ENCODE measurements at regions of chr5 and their contacts with region 1.

Region 1: GRCh38 chr5:54785729-54786591 is 199.4 kb downstream of the ESM1 start:
- DNase-seq: peak; percentile 46 to 85 (median 68)
- ATAC-seq: peak; percentile 99
- H3K4me3 ChIP-seq: no peak overlapping the region
- H3K27ac ChIP-seq: peak overlapping the region; percentile 7; the same call in 2 of the 3 replicates
- H3K4me1 ChIP-seq: peaks cover 9 to 16% of the 10 kb centered on the region in 2 experiments
- H3K27me3 ChIP-seq: no peaks in the 10 kb centered on the region
- CTCF ChIP-seq: peak; percentile 29 to 50 (median 31)
- EP300 ChIP-seq: peak; percentile 58
- POLR2A ChIP-seq: no peak
- RAD21 ChIP-seq: peak in 1 of 2 experiments; percentile 10; a peak in 2 of 4 replicates

Region 2: GRCh38 chr5:54743997-54744788 is 41.8 kb before region 1 on chr5:
- CTCF ChIA-PET with region 1: no interaction called
- POLR2A ChIA-PET with region 1: no interaction called
- in situ Hi-C with region 1: no loop called
- intact Hi-C with region 1: loop called (anchors 5 kb)
- DNase-seq: peak; percentile 66 to 92 (median 72)
- ATAC-seq: peak; percentile 88
- H3K4me3 ChIP-seq: no peak overlapping the region
- H3K27ac ChIP-seq: peak overlapping the region; percentile 99
- H3K4me1 ChIP-seq: peaks cover 16 to 65% of the 10 kb centered on the region in 2 experiments
- H3K27me3 ChIP-seq: no peaks in the 10 kb centered on the region
- CTCF ChIP-seq: no peak
- EP300 ChIP-seq: peak; percentile 93
- POLR2A ChIP-seq: no peak; the same call in 1 of the 2 replicates
- RAD21 ChIP-seq: no peak

Region 3: GRCh38 chr5:54905943-54906537 is 120.1 kb after region 1 on chr5:
- CTCF ChIA-PET with region 1: no interaction called
- POLR2A ChIA-PET with region 1: no interaction called
- in situ Hi-C with region 1: no loop called
- intact Hi-C with region 1: no loop called
- DNase-seq: peak; percentile 37 to 61 (median 46)
- ATAC-seq: peak; percentile 69
- H3K4me3 ChIP-seq: no peak overlapping the region
- H3K27ac ChIP-seq: no peak overlapping the region
- H3K4me1 ChIP-seq: no peaks in the 10 kb centered on the region
- H3K27me3 ChIP-seq: peaks cover 0 to 7% of the 10 kb centered on the region in 2 experiments; a peak in 2 of 5 replicates
- CTCF ChIP-seq: peak; percentile 60 to 82 (median 68); a peak in 5 of 6 replicates
- EP300 ChIP-seq: no peak
- POLR2A ChIP-seq: no peak
- RAD21 ChIP-seq: peak; percentile 79 to 80

Region 4: DNA sequence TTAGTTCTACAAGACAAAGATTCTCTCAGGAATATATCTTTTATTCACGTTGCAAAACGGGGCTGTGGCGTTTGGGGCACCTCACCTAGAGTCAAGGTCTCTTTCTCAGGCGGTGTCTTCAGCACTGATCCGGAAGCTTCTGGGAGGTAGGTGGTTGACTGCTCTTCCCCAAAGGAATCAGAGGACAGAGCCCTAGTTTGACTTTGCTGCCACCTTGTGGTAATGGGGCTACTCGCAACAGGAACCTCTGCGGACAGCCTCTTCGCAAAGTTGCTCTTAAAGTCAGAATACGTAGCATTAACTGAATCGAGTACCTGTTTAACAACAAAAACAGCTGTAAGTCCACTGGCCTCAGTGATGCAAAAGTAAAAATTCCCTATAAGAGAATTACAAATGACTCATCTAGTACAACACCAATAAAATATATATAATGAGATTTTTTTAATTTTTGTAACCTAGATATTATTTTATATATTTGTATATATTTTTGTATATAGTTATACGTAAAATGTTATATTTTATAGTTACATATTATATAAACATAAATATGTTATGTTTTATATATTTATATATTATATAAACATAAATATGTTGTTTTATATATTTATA is 360.7 kb after region 1 on chr5:
- CTCF ChIA-PET with region 1: no interaction called
- POLR2A ChIA-PET with region 1: no interaction called
- in situ Hi-C with region 1: no loop called
- intact Hi-C with region 1: no loop called
- DNase-seq: peak; percentile 63 to 84 (median 68)
- ATAC-seq: peak; percentile 99
- H3K4me3 ChIP-seq: no peak overlapping the region
- H3K27ac ChIP-seq: no peak overlapping the region
- H3K4me1 ChIP-seq: no peaks in the 10 kb centered on the region
- H3K27me3 ChIP-seq: peaks cover 4 to 17% of the 10 kb centered on the region in 2 experiments; a peak in 3 of 5 replicates
- CTCF ChIP-seq: peak; percentile 86 to 91 (median 88)
- EP300 ChIP-seq: no peak
- POLR2A ChIP-seq: no peak
- RAD21 ChIP-seq: peak; percentile 80 to 88

Region 5: GRCh38 chr5:55286411-55286933 is 500.5 kb after region 1 on chr5:
- CTCF ChIA-PET with region 1: no interaction called
- POLR2A ChIA-PET with region 1: no interaction called
- in situ Hi-C with region 1: no loop called
- intact Hi-C with region 1: no loop called
- DNase-seq: no peak
- ATAC-seq: no peak
- H3K4me3 ChIP-seq: no peak overlapping the region
- H3K27ac ChIP-seq: no peak overlapping the region
- H3K4me1 ChIP-seq: no peaks in the 10 kb centered on the region
- H3K27me3 ChIP-seq: no peaks in the 10 kb centered on the region
- CTCF ChIP-seq: no peak
- EP300 ChIP-seq: no peak
- POLR2A ChIP-seq: no peak
- RAD21 ChIP-seq: no peak